ENCODE measurements at regions of chr1 and their contacts with region 1.

Region 1: DNA sequence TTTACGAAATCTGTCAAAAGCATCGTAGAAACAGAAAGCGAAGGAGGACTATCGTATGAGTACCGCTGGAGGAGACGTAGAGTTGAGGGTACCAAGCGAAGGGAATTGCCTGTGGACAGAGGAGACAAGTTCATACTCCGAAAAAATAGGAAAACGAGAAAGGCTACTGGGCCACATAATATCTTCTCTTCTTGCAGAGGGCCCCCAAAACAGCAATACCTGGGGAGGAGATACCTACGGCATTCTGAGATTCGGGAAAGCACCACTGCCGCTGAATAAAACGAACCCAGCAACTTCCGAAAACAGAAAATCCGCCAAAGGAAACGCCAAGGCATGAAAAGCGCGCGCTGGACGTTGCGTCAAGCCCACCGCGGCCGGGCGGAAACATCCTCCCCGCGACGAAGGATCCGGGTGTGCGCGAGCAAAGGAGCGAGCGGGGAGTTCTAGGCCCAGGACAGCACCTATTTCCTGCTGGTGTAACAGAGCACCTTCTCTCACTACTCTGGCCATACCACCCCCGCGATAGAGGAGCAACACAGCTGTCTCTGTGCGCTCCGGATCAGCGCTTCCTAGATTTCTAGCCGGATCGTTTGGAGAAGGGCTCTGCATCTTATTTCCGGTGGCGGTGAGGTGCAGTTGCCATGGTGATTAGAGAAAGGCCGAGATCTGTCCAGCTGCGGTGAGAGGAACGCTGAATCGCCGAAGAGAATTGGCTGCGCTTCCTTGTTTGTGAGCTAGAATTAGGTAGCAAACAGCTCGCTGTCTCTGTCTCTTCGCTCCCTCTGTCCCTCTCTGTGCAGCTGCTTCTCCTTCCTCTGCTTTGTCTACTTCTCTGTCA is at the starts of genes EFCAB7 and ITGB3BP:
- DNase-seq: peak; percentile 69 to 90 (median 86)
- H3K4me3 ChIP-seq: peak within 1 kb of the TSS; percentile 55 to 93 (median 77)
- H3K27ac ChIP-seq: peak within 1 kb of the TSS; percentile 86 to 99 (median 96)
- H3K27me3 ChIP-seq: no peaks in the 10 kb centered on the region
- CTCF ChIP-seq: peak in 27 of 56 donors; percentile 4 to 45 (median 26)
- total RNA-seq, gene EFCAB7: 16.8 to 45.1 (median 26.3) TPM
- total RNA-seq, gene ITGB3BP: 7.8 to 52.3 (median 17.5) TPM

Region 2: DNA sequence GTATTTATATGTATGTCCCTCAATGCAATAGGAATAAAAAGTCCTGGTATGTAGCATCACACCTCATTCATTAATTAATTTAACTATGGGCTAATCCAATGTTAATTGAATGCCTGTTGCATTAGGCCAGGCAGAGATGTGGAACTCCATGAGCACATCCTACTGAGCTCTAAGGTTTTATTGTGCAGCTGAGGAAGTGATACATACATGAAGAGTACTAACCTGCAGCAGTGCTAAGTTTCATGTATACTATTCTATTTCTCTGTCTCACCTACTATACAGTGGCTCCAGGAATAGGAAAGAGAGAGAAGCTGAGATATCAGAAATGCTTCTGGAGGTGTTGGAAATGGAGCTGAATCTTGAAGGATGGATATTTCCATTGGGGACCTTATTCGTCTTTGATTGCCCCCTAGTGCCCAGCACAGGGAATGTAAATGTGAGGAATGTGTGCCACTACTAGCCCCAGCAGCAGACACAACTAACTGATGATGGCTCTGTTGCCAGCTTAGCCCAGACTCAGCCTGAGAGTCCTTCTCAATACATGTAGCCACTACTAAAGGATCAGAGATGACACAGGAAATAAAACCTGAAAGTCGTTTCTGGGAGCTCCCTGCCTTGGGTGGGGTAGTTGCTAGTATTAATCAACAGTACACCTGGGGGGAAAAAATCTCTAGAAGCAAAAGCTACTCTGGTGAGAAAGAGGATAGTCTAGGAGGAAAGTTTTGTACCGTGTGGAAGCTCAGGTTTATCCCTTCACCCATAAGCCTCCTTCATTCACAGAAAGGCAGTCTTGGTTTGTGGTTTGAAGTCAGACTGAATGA is 374.1 kb before region 1 on chr1:
- intact Hi-C with region 1: no loop called
- DNase-seq: peak in 6 of 10 donors; percentile 21 to 77 (median 52)
- H3K4me3 ChIP-seq: no peak overlapping the region
- H3K27ac ChIP-seq: no peak overlapping the region
- H3K27me3 ChIP-seq: peaks cover 0 to 18% (median 0%) of the 10 kb centered on the region in 45 donors
- CTCF ChIP-seq: peak; percentile 22 to 84 (median 66)

Region 3: DNA sequence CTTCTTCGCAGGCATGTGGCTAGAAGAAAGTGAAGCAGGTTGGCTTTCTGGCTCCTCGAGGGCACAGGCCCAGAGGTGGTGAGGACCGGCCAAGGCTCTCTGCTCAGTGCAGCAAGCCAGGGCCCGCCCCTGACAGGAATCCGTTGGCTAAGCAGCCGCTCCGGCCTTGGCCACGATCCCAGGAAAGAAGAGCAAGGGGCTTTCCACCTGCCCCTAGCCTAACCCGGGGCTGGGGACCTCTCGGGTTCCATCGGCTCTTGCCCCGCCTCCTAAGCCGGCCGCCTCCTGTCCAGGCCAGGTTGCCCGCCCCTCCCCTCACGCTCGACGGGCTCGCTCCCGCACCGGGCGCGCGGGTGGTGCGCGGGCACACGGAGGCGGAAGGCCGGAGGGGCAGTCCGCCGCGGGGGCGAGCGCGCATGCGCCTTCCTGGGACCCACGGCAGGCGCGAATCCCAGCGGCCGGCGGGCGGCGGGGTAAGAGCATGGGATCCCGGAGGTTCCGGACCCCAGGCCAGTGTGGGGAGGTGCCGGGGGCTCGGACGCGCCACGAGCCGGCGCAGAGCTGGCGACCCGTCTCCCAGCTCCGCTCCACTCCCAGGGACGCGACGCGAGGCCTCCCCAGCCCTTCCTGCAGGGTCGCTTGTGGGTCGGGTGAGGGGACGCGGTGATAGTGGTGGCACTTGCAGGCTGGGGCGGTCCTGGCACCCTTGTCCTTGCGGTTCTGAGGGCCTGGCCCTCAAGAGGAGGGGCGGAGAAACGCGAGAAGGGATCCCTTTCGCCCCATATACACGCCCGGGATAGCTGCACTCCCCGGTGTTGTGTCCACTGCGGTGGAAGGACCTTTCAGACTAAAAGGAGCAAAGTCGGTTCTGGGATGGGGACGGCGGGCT is 155.7 kb before region 1 on chr1 and contains the start of gene ALG6:
- intact Hi-C with region 1: loop called (anchors 2 to 5 kb)
- DNase-seq: peak; percentile 77 to 96 (median 90)
- H3K4me3 ChIP-seq: peak within 1 kb of the TSS; percentile 50 to 99 (median 92)
- H3K27ac ChIP-seq: peak within 1 kb of the TSS in 57 of 59 donors; percentile 54 to 93 (median 81)
- H3K27me3 ChIP-seq: no peaks in the 10 kb centered on the region
- CTCF ChIP-seq: peak in 42 of 56 donors; percentile 9 to 67 (median 34)
- total RNA-seq, gene ALG6: 6.3 to 21.8 (median 12.7) TPM

Region 4: DNA sequence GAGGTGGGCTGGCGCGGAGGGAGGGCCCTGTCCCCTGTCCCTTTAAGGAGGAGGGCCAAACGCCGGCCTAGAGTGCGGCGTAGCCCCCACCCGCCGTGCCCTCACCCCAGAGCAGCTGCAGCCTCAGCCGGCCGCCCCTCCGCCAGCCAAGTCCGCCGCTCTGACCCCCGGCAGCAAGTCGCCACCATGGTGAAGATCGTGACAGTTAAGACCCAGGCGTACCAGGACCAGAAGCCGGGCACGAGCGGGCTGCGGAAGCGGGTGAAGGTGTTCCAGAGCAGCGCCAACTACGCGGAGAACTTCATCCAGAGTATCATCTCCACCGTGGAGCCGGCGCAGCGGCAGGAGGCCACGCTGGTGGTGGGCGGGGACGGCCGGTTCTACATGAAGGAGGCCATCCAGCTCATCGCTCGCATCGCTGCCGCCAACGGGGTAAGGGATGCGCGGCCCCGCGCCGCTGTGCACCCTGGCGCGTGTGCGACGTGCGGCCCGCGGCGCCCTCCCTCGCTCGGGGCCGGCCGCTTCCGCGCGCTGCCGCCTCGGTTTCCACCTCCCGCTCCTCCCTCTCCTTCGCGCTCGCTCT is 70.3 kb after region 1 on chr1 and contains the start of gene PGM1:
- intact Hi-C with region 1: loop called in 1 of 2 experiments (anchors 1 kb)
- DNase-seq: peak; percentile 53 to 88 (median 76)
- H3K4me3 ChIP-seq: peak within 1 kb of the TSS; percentile 59 to 95 (median 86)
- H3K27ac ChIP-seq: peak within 1 kb of the TSS; percentile 22 to 97 (median 91)
- H3K27me3 ChIP-seq: no peaks in the 10 kb centered on the region
- CTCF ChIP-seq: peak in 9 of 56 donors; percentile 8 to 33 (median 15)
- total RNA-seq, gene PGM1: 25.8 to 77.5 (median 44.4) TPM

Region 5: GRCh38 chr1:63635681-63636080 is 112.6 kb after region 1 on chr1:
- intact Hi-C with region 1: no loop called
- DNase-seq: no peak
- H3K4me3 ChIP-seq: no peak overlapping the region
- H3K27ac ChIP-seq: no peak overlapping the region
- H3K27me3 ChIP-seq: no peaks in the 10 kb centered on the region
- CTCF ChIP-seq: no peak

Region 6: DNA sequence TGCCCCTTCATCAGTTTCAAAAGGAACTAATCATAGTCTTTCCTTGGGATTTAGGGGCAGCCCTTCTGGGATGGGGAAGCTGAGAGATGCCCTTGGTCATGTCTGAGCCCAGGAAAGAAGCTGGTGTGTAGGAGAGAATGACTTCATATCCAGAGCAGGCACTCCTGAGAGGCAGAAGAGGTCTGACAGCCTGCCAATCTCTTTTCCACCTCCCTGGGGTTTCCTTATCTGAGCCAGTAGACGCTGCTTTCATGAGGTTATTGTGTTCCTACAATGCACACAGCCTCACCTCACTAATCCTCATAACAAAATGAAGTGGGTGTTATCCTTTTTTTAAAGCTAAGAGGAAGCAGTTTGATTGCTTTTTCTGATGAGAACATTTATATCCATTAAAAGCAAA is 264.8 kb after region 1 on chr1:
- intact Hi-C with region 1: no loop called
- DNase-seq: peak in 1 of 10 donors; percentile 71
- H3K4me3 ChIP-seq: no peak overlapping the region
- H3K27ac ChIP-seq: no peak overlapping the region
- H3K27me3 ChIP-seq: no peaks in the 10 kb centered on the region
- CTCF ChIP-seq: no peak

Measured in dorsolateral prefrontal cortex (tissue), 120 donors.